Activated CD4-positive, alpha-beta memory T cell treated with anti-CD3 and anti-CD28 coated beads, Interleukin-2, amount 10 ng/mL, durations not matched to agents 7 days and 5 days (primary cell): ENCODE measurements at regions of chr5 and their contacts with region 1.

Region 1: DNA sequence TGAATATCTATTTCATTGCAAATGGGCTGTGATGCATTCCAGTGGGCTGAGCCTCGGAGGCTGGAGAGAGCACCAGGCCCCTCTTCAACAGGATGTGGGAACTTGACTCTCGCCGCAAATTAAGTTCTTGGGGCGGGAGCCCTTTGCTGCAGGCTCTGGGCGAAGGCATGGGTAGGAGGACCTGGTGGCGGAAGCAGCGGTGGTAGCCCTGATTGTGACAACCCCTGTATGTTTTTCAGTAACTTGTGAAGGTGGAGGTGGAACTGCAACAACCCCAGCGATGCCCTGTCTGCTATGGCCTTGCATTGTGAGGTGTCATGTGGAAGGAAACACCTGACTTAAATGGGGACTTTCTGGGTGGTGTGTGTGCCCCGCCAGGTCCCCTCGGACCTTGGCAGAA is 9.4 kb downstream of the FYB1 start:
- DNase-seq: peak; percentile 90
- H3K4me3 Mint-ChIP-seq: peak overlapping the region; percentile 72
- H3K27ac Mint-ChIP-seq: peak overlapping the region; percentile 96
- H3K4me1 Mint-ChIP-seq: peaks cover 91% of the 10 kb centered on the region
- H3K27me3 Mint-ChIP-seq: no peaks in the 10 kb centered on the region

Region 2: DNA sequence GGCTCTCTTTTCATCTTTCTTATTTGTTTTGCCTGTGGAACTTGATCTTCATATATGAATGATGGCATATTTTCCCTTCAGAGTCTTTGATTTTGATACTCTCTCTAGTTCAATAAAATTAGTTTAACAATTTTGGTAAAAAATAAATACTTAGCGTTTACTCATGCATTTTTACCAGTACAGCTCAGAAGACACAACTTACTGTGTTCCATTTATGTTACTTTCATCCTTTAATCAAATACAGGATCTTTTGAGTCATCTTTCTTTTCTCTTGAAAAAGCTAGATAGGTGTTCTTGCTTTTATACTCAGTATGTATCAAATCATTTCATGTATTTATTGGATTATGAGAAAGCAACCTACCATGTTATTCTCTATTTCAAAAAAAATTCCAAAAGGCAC is 88.6 kb before region 1 on chr5:
- CTCF ChIA-PET with region 1: no interaction called
- POLR2A ChIA-PET with region 1: no interaction called
- DNase-seq: no peak
- H3K4me3 Mint-ChIP-seq: no peak overlapping the region
- H3K27ac Mint-ChIP-seq: no peak overlapping the region
- H3K4me1 Mint-ChIP-seq: peaks cover 18% of the 10 kb centered on the region
- H3K27me3 Mint-ChIP-seq: no peaks in the 10 kb centered on the region

Region 3: DNA sequence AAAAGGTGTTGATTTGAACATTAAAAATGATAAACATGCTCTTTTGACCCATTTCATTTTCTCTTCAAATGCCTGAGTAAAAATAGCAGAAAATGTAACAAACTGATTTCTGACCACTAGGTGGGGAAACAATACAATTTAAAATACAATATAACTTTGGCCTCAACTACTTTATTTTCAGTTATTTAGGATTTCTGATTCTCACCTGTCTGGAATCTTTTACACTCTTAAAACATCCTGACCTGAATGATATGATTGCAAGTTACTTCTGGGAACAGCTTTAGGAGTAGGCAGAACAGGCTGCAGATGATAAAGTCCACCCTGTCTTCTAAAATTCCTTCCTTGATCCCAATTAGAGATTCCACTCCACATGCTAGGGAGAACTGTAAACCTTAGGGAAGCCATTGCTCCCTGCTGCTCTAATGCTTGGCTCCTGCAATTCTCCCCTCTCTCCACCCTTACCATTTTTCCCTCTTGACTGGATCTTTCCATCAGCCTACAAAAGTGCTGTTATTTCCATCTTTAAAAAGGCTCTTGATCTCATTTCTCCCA is 60.9 kb before region 1 on chr5:
- CTCF ChIA-PET with region 1: no interaction called
- POLR2A ChIA-PET with region 1: interaction called, 18 read pairs
- DNase-seq: no peak
- H3K4me3 Mint-ChIP-seq: no peak overlapping the region
- H3K27ac Mint-ChIP-seq: peak overlapping the region; percentile 45
- H3K4me1 Mint-ChIP-seq: peaks cover 56% of the 10 kb centered on the region
- H3K27me3 Mint-ChIP-seq: no peaks in the 10 kb centered on the region

Region 4: GRCh38 chr5:39164529-39165402 is 45.2 kb before region 1 on chr5:
- CTCF ChIA-PET with region 1: no interaction called
- POLR2A ChIA-PET with region 1: interaction called, 36 read pairs
- DNase-seq: no peak
- H3K4me3 Mint-ChIP-seq: peak overlapping the region; percentile 60
- H3K27ac Mint-ChIP-seq: peak overlapping the region; percentile 79
- H3K4me1 Mint-ChIP-seq: peaks cover 85% of the 10 kb centered on the region
- H3K27me3 Mint-ChIP-seq: no peaks in the 10 kb centered on the region

Region 5: DNA sequence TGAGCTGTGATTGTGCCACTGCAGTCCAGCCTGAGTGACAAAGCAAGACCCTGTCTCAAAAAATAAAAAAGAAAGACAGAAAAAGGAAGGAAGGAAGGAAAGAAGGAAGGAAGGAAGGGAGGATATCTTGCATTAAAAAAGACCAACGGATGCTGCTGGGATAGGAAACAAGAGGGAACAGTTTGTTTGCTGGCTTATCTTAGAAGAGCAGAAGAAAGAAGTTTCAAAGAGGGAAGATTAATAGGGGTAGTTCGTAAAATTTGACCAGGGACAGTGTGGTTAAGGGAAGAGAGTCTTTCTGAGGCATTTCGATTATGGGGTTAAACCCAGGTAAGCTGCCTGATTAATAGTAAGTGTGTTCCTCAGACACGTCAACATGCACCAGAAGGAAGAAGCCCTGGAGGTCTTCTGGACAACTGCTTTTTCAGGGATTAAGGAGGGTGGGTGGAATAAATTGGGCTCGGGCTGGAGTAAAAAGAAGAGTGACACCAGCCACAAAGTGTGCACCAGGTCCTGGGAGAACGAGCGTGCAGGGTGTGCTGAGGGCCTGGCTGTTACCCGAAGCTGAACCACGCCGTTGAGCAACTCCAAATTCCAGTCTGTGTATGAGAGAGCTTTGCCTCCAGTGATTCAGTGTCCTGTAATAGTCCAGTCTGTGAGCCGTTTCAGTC is 15.3 kb before region 1 on chr5:
- CTCF ChIA-PET with region 1: interaction called, 30 read pairs
- POLR2A ChIA-PET with region 1: interaction called, 238 read pairs
- DNase-seq: no peak
- H3K4me3 Mint-ChIP-seq: peak overlapping the region; percentile 76
- H3K27ac Mint-ChIP-seq: peak overlapping the region; percentile 79
- H3K4me1 Mint-ChIP-seq: peaks cover 77% of the 10 kb centered on the region
- H3K27me3 Mint-ChIP-seq: no peaks in the 10 kb centered on the region

Region 6: DNA sequence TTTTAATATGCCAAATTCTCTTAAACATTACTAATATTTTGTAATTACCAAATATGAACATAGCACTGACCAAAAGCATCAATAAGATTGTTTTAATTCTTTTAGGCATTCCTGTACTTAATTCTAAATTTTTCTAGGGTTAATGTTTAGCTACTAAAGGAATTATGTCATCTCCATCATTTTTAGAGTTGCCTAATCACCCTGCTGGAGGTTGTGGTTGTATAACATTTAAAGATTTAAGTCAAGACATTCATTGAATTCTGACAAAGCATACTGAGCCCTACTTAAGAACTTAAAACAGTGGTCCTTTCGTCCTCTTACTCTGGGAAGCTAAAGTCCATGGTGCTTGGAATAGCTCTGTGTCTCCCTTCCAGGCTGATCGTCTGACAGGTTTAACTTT is 242.9 kb after region 1 on chr5:
- CTCF ChIA-PET with region 1: no interaction called
- POLR2A ChIA-PET with region 1: no interaction called
- DNase-seq: no peak
- H3K4me3 Mint-ChIP-seq: no peak overlapping the region
- H3K27ac Mint-ChIP-seq: no peak overlapping the region
- H3K4me1 Mint-ChIP-seq: no peaks in the 10 kb centered on the region
- H3K27me3 Mint-ChIP-seq: peaks cover 24% of the 10 kb centered on the region